Activated naive CD4-positive, alpha-beta T cell treated with anti-CD3 and anti-CD28 coated beads for 36 hours (primary cell): ENCODE measurements at regions of chr12 and their contacts with region 1.

Region 1: GRCh38 chr12:94101738-94102660 is 46.4 kb upstream of the PLXNC1 start:
- DNase-seq: peak; percentile 93
- H3K4me3 Mint-ChIP-seq: peak overlapping the region; percentile 78
- H3K27ac Mint-ChIP-seq: peak overlapping the region; percentile 7
- H3K4me1 Mint-ChIP-seq: peaks cover 16% of the 10 kb centered on the region
- H3K27me3 Mint-ChIP-seq: no peaks in the 10 kb centered on the region

Region 2: DNA sequence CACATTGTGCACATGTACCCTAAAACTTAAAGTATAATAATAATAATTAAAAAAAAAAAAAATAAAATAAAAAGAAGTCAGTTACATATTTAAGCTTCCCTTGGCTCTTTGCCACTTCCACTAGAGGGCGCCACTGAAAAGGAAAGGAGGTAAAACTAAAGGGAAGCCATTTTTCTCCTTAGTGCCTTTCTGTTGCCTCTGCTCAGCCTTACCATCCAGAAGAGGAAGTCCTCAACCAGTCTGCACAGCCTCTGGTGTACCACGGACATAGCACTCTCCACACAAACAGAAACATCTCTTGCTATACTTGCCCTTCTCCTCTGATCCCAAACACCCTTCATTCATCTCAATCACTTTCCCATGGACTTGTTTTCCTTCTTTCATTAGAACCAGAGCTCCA is 1003.9 kb before region 1 on chr12:
- CTCF ChIA-PET with region 1: interaction called, 5 read pairs
- intact Hi-C with region 1: loop called (anchors 2 kb)
- DNase-seq: peak; percentile 91
- H3K4me3 Mint-ChIP-seq: no peak overlapping the region
- H3K27ac Mint-ChIP-seq: peak overlapping the region; percentile 38
- H3K4me1 Mint-ChIP-seq: peaks cover 10% of the 10 kb centered on the region
- H3K27me3 Mint-ChIP-seq: no peaks in the 10 kb centered on the region

Region 3: GRCh38 chr12:93441617-93442410 is 660.2 kb before region 1 on chr12 and contains the start of gene UBE2N:
- CTCF ChIA-PET with region 1: no interaction called
- intact Hi-C with region 1: loop called (anchors 5 kb)
- DNase-seq: peak; percentile 96
- H3K4me3 Mint-ChIP-seq: peak within 1 kb of the TSS; percentile 95
- H3K27ac Mint-ChIP-seq: peak within 1 kb of the TSS; percentile 94
- H3K4me1 Mint-ChIP-seq: peaks cover 46% of the 10 kb centered on the region
- H3K27me3 Mint-ChIP-seq: no peaks in the 10 kb centered on the region
- total RNA-seq, gene UBE2N: 143 TPM

Region 4: DNA sequence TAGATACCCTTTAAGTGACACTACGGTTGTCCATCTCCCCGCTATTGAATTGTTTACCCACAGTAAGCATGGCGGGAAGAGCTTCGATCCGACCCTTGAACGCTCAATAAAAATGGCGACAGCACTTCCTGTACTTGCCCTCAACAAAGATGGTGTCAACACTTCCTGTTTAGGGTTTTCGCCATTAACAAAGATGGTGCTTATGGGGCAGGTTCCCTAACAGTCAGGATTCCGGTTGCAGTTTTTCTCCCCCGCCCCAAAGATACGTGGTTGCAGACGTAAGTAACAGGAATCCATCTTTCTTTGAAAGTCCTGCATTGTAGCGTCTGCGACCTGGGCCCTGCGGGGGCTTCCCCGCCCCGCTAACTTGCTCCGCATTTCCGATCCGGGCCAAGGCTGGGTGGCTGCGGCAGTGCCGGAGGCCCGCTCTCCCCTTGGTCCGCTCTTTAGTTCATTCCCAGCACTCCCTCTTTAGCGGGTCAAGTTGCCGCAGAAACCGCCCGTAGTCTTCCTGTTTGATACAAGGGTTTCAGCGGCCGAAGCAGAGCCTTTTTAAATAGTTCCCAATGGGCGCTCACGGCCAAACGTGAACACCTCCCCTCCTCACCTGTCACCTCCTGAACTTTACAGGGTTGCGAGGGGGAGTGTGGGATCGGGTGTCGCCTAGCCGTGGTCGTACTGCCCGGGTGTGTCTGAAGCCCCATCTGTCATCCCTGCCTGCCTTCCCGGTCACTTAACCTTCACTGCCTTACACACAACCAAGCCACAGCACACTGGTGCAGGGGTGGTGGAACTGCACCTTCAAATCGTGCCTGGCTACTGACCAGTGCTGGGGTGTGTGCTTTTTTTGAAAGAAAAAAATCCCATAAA is 424.6 kb before region 1 on chr12 and contains the start of gene CRADD:
- CTCF ChIA-PET with region 1: interaction called, 4 read pairs
- intact Hi-C with region 1: loop called (anchors 1 kb)
- DNase-seq: peak; percentile 92
- H3K4me3 Mint-ChIP-seq: peak within 1 kb of the TSS; percentile 89
- H3K27ac Mint-ChIP-seq: peak within 1 kb of the TSS; percentile 99
- H3K4me1 Mint-ChIP-seq: peaks cover 40% of the 10 kb centered on the region
- H3K27me3 Mint-ChIP-seq: peaks cover 9% of the 10 kb centered on the region
- total RNA-seq, gene CRADD: 14.3 to 15.6 TPM

Region 5: GRCh38 chr12:93938317-93938716 is 163.7 kb before region 1 on chr12:
- CTCF ChIA-PET with region 1: no interaction called
- intact Hi-C with region 1: no loop called
- DNase-seq: no peak
- H3K4me3 Mint-ChIP-seq: no peak overlapping the region
- H3K27ac Mint-ChIP-seq: no peak overlapping the region
- H3K4me1 Mint-ChIP-seq: no peaks in the 10 kb centered on the region
- H3K27me3 Mint-ChIP-seq: no peaks in the 10 kb centered on the region

Region 6: DNA sequence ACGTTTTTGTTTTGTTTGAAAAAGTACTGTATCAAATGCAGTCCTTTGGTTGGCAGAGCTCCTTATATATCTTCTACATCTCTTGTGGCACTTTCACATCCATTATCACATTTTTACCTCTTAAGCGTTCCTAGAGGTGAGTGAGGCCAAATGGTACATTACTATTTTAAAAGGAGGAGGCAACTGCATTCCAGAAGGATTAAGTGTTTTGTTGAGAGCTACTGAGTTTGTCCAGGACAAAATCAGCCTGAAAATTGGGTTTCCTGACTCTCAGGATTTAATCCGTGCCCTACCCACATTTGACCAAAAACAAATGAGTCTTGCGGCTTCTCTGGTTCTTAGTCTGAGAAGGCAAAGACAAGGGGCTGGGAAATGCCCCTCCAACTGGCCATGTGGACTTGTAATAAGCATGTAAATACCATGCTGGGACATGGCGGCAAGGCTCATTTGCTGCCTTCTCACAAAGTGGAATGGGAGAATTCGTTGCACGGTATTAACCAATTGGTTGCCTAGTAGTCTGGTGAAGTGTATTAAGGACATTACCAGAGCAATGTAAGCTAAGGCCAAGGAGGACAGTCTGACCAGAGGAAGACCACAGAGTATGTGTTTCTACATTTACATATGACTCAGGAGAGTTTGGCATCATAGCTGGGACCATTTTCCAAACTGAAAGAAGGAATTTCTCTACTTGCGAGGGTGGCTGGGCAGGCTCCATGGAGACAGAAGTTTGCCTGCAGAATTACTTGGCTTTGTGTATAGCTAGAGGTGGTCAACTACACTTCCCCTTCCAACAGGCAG is 129.4 kb before region 1 on chr12:
- CTCF ChIA-PET with region 1: interaction called, 136 read pairs
- intact Hi-C with region 1: no loop called
- DNase-seq: no peak
- H3K4me3 Mint-ChIP-seq: no peak overlapping the region
- H3K27ac Mint-ChIP-seq: no peak overlapping the region
- H3K4me1 Mint-ChIP-seq: peaks cover 4% of the 10 kb centered on the region
- H3K27me3 Mint-ChIP-seq: no peaks in the 10 kb centered on the region

Region 7: GRCh38 chr12:94080348-94081009 is 21.5 kb before region 1 on chr12:
- CTCF ChIA-PET with region 1: interaction called, 92 read pairs
- intact Hi-C with region 1: loop called (anchors 1 kb)
- DNase-seq: no peak
- H3K4me3 Mint-ChIP-seq: no peak overlapping the region
- H3K27ac Mint-ChIP-seq: no peak overlapping the region
- H3K4me1 Mint-ChIP-seq: peaks cover 8% of the 10 kb centered on the region
- H3K27me3 Mint-ChIP-seq: no peaks in the 10 kb centered on the region

Region 8: GRCh38 chr12:94169495-94169894 is 67.5 kb after region 1 on chr12:
- CTCF ChIA-PET with region 1: no interaction called
- intact Hi-C with region 1: no loop called
- DNase-seq: no peak
- H3K4me3 Mint-ChIP-seq: no peak overlapping the region
- H3K27ac Mint-ChIP-seq: no peak overlapping the region
- H3K4me1 Mint-ChIP-seq: peaks cover 50% of the 10 kb centered on the region
- H3K27me3 Mint-ChIP-seq: no peaks in the 10 kb centered on the region

Region 9: GRCh38 chr12:94180558-94181296 is 78.7 kb after region 1 on chr12:
- CTCF ChIA-PET with region 1: no interaction called
- intact Hi-C with region 1: no loop called
- DNase-seq: no peak
- H3K4me3 Mint-ChIP-seq: no peak overlapping the region
- H3K27ac Mint-ChIP-seq: no peak overlapping the region
- H3K4me1 Mint-ChIP-seq: peaks cover 6% of the 10 kb centered on the region
- H3K27me3 Mint-ChIP-seq: no peaks in the 10 kb centered on the region

Region 10: DNA sequence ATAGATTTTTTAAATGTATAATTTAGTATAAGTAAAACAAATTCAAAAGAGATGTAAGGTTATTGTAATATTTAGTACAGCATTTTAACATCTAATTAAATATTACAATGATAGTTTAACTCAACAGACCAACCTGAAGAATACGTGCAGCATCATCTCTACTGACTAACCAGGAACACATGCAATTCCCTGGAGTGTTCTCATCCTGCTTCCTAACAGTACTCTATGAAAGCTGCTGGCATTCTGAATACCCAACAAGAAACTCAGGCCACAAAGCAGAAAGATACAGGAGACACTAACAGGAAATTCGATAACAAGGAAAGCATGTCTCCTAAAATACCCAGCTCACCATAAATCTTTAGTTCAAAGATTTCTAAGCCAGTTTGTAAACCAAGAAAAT is 299.3 kb after region 1 on chr12:
- CTCF ChIA-PET with region 1: no interaction called
- intact Hi-C with region 1: no loop called
- DNase-seq: no peak
- H3K4me3 Mint-ChIP-seq: no peak overlapping the region
- H3K27ac Mint-ChIP-seq: no peak overlapping the region
- H3K4me1 Mint-ChIP-seq: peaks cover 14% of the 10 kb centered on the region
- H3K27me3 Mint-ChIP-seq: no peaks in the 10 kb centered on the region